ENCODE measurements at regions of chr20 and their contacts with region 1.

Region 1: DNA sequence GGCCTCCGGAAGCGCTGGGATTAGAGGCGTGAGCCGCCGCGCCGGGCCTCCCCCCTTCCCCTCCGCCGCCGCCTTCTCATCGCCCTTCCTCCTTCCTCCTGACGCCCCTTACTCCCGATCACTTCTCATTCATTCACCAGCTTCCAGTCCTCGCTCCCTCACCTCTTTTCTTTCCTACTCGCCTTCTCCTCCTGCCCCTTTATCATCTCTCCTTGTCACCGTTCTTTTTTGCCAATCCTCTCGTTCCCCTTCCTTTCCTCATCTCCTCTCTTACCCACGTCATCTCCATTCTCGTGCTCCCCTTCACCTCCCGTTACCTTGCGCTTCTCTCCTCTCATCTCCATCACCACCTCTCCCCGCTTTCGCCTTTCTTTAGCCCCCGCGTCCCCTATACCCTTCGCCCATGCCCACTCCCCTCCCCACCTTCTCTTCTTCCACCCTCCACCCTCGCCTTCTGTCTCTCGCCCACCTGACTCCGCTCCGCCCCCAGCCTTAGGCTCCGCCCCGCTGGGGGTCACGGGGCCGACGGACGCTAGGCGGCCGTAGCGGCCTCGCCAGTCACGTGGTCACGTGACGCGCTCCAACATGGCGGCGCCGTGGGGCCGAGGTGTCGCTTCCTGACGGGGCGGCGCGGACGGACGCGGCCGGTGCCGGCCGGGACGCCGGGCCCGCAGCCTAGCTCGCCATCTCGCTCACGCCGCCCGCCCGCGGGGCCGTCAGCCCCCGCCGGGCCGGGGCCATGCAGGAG is at the start of gene ARFGEF2:
- DNase-seq: peak; percentile 90
- H3K4me3 Mint-ChIP-seq: peak within 1 kb of the TSS; percentile 82
- H3K27ac Mint-ChIP-seq: peak within 1 kb of the TSS; percentile 92
- H3K4me1 Mint-ChIP-seq: peaks cover 24% of the 10 kb centered on the region
- H3K27me3 Mint-ChIP-seq: no peaks in the 10 kb centered on the region
- CTCF ChIP-seq: no peak
- total RNA-seq, gene ARFGEF2: 30.3 and 33.5 TPM in 2 replicates

Region 2: DNA sequence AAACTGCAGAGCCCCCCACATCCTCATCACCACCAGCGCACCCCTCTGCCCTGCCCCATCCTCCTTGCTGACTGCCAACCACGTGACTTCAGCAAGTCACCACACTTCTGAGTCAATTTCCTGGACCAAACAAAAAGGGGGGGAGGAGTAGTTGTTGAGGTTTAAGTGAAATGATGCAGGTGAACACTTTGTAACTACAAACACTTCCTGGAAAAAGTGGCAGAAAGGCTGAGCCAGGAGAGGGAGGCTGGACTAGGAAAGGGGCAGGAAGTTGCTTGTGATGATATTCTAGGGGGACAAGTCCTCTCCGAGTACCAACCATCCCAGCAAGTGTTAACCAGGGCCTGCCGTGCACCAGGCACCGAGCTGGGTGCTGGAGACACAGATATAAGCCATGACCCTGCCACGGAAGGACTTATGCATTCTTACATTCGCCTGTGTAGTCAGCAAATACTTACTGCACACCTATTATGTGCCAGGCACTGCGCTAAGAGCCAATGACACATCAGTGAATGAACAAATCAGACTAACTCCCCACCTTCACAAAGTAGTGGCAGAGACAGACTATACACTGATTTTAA is 160.8 kb before region 1 on chr20:
- CTCF ChIA-PET with region 1: no interaction called
- POLR2A ChIA-PET with region 1: no interaction called
- intact Hi-C with region 1: no loop called
- DNase-seq: peak; percentile 51
- H3K4me3 Mint-ChIP-seq: no peak overlapping the region
- H3K27ac Mint-ChIP-seq: no peak overlapping the region
- H3K4me1 Mint-ChIP-seq: peaks cover 11% of the 10 kb centered on the region
- H3K27me3 Mint-ChIP-seq: no peaks in the 10 kb centered on the region
- CTCF ChIP-seq: no peak

Region 3: DNA sequence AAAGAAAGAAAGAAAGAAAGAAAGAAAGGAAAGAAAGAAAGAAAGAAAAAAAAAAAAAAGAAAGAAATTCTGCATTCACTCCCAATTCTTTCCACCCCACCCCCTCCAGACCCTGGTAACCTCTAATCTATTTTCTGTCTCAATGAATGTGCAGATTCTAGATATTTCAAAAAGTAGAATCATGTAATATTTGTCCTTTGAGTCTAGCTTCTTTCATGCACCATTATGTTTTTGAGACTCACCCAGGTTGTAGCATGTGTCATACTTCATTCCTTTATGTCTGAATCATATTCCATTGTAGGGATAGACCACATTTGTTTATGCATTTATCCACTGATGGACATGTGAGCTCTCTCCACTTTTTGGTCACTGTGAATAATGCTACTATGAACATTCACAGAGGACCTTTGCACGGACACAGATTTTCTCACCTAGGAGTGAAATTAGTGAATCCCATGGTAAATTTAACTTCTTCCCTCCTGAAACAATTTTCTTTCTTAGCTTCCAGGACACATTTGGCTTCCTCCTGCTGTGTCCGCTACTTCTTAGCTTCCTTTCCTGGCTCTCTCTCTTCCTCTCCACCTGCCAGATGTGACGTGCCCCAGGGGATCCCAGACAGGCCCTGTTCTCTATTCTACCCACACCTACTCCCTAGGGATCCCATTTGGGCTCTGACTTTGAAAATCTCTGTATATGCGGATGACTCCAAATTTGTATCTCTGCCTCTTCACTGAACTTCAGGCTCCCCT is 23.9 kb before region 1 on chr20:
- CTCF ChIA-PET with region 1: no interaction called
- POLR2A ChIA-PET with region 1: interaction called, 10 read pairs
- intact Hi-C with region 1: no loop called
- DNase-seq: peak; percentile 70
- H3K4me3 Mint-ChIP-seq: no peak overlapping the region
- H3K27ac Mint-ChIP-seq: peak overlapping the region; percentile 72
- H3K4me1 Mint-ChIP-seq: peaks cover 15% of the 10 kb centered on the region
- H3K27me3 Mint-ChIP-seq: peaks cover 15% of the 10 kb centered on the region
- CTCF ChIP-seq: no peak

Region 4: DNA sequence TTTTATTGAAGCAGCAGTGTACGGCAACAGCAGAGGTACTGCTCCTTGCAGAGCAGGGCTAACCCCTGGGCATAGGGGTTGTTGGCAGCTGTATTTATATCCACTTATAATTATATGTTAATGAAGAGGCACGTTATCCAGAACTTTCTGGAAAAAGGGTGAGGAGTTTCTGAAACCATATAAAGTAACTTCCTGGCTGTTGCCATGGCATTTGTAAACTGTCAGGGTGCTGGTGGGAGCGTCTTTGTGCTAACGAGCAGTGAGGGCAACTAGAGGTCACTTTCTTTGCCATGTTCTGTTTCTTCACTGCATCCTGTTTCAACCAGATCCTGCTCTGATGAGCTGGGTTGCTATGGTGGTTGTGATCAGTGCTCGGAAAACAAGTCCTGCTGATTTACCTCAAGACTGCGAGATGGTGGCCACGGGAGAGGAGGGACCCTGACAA is 11.0 kb before region 1 on chr20:
- CTCF ChIA-PET with region 1: interaction called, 14 read pairs
- POLR2A ChIA-PET with region 1: interaction called, 14 read pairs
- intact Hi-C with region 1: no loop called
- DNase-seq: no peak
- H3K4me3 Mint-ChIP-seq: no peak overlapping the region
- H3K27ac Mint-ChIP-seq: no peak overlapping the region
- H3K4me1 Mint-ChIP-seq: no peaks in the 10 kb centered on the region
- H3K27me3 Mint-ChIP-seq: peaks cover 75% of the 10 kb centered on the region
- CTCF ChIP-seq: no peak

Region 5: GRCh38 chr20:48983423-48984400 is 62.4 kb after region 1 on chr20:
- CTCF ChIA-PET with region 1: no interaction called
- POLR2A ChIA-PET with region 1: interaction called, 12 read pairs
- intact Hi-C with region 1: no loop called
- DNase-seq: peak; percentile 85
- H3K4me3 Mint-ChIP-seq: no peak overlapping the region
- H3K27ac Mint-ChIP-seq: peak overlapping the region; percentile 57
- H3K4me1 Mint-ChIP-seq: peaks cover 15% of the 10 kb centered on the region
- H3K27me3 Mint-ChIP-seq: no peaks in the 10 kb centered on the region
- CTCF ChIP-seq: no peak

Region 6: GRCh38 chr20:49046087-49046900 is 125.0 kb after region 1 on chr20 and contains the start of gene CSE1L:
- CTCF ChIA-PET with region 1: no interaction called
- POLR2A ChIA-PET with region 1: interaction called, 21 read pairs
- intact Hi-C with region 1: loop called (anchors 5 kb)
- DNase-seq: peak; percentile 94
- H3K4me3 Mint-ChIP-seq: peak within 1 kb of the TSS; percentile 95
- H3K27ac Mint-ChIP-seq: peak within 1 kb of the TSS; percentile 97
- H3K4me1 Mint-ChIP-seq: peaks cover 24% of the 10 kb centered on the region
- H3K27me3 Mint-ChIP-seq: no peaks in the 10 kb centered on the region
- CTCF ChIP-seq: no peak
- total RNA-seq, gene CSE1L: 65.2 and 101 TPM in 2 replicates